ENCODE measurements at regions of chr6 and their contacts with region 1.

Region 1: GRCh38 chr6:6057424-6058053 is 50.8 kb upstream of the NRN1 start:
- DNase-seq: peak; percentile 62
- CTCF ChIP-seq: peak; percentile 11

Region 2: GRCh38 chr6:5657684-5658430 is 399.7 kb before region 1 on chr6:
- in situ Hi-C with region 1: no loop called
- DNase-seq: no peak
- CTCF ChIP-seq: no peak

Region 3: GRCh38 chr6:6547110-6547879 is 489.8 kb after region 1 on chr6:
- in situ Hi-C with region 1: loop called (anchors 10 kb)
- DNase-seq: peak; percentile 87
- CTCF ChIP-seq: peak; percentile 84